HEK293 (cell line): ENCODE measurements at regions of chr6 and their contacts with region 1.

Region 1: DNA sequence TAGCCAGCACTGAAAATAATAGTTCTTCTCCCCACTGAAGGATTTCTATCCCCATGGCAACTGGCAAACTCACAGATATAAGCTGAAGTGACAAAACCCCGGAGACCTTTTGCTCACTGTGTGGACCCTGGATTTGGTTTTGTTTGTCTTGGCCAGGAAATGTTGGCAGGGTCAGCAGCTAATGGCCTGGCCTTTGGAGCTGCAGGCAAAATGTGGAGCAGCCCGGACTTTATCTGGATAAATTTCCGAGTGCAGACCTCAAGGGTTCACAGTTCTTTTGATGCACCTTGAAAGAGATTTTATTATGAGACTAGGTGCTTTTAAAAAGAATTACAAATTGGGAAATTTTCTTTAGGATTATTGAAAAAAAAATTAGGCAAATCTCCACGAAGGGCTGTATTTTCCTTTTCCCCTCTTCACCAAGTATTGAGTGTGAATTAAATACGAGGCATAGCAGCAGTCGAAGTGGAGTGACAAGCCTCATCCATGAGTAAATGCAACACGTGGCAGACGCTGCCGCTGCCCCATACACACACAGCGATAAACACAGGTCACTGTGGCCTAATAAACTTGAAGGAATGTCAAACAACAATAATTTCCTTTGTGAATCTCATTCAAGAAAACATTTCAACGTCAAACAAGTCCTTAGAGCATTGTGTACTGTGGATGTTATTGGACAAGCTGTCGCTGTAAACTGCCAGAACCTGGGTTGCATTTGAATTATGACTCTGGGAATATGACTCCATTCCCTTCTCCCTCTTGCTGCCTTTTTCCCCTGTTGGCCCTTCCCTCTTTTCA is 35.1 kb upstream of the CCN6 start:
- H3K4me3 ChIP-seq: no peak overlapping the region
- H3K27ac ChIP-seq: no peak overlapping the region
- H3K4me1 ChIP-seq: peaks cover 17% of the 10 kb centered on the region
- CTCF ChIP-seq: no peak

Region 2: DNA sequence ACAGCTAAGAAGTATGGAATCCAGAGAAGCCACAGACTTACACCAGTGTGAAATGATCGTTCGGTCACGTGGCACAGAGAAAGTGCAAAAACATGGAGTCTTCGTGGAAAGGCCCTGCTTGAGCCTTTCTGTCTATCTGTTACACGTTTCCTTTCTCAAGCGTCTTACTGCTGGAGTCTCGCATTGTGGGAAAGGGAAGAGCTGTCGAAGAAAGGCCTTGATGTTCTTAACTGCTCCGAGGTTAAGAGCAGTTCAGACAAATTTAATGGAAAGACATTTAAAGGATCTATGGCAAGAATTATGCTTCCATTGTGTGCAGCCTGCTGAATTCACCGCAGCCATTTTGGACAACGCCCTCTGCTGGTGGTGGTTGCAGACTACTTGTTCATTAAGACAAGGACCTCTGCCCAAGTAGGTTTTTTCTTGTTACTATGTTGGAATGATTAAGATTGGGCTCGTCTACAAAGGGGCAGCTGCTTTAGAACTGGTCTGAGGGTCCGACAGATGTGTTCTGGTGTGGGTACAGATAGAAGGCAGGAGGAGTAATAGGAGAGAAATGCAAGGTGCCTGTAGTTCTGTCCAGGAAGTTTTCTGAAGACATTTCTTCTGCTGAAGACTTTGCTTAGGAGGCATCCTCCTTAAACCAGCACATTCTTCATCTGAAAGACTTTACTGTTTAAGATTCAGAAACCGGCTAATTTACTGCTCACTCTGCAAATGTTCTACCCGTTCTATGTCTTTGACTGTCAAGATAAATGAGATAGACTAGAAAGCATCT is 10.4 kb after region 1 on chr6:
- CTCF ChIA-PET with region 1: interaction called, 29 read pairs
- POLR2A ChIA-PET with region 1: no interaction called
- H3K4me3 ChIP-seq: no peak overlapping the region
- H3K27ac ChIP-seq: no peak overlapping the region
- H3K4me1 ChIP-seq: no peaks in the 10 kb centered on the region
- CTCF ChIP-seq: peak; percentile 47; the same call in 1 of the 2 replicates